Right ventricle myocardium superior (tissue), 1 donor: ENCODE measurements at regions of chr6 and their contacts with region 1.

Region 1: GRCh38 chr6:149431905-149432775 is 32.1 kb downstream of the SUMO4 start:
- DNase-seq: peak; percentile 95
- ATAC-seq: peak; percentile 98

Region 2: GRCh38 chr6:148720406-148720805 is 711.7 kb before region 1 on chr6:
- intact Hi-C with region 1: no loop called
- DNase-seq: no peak
- ATAC-seq: no peak

Region 3: DNA sequence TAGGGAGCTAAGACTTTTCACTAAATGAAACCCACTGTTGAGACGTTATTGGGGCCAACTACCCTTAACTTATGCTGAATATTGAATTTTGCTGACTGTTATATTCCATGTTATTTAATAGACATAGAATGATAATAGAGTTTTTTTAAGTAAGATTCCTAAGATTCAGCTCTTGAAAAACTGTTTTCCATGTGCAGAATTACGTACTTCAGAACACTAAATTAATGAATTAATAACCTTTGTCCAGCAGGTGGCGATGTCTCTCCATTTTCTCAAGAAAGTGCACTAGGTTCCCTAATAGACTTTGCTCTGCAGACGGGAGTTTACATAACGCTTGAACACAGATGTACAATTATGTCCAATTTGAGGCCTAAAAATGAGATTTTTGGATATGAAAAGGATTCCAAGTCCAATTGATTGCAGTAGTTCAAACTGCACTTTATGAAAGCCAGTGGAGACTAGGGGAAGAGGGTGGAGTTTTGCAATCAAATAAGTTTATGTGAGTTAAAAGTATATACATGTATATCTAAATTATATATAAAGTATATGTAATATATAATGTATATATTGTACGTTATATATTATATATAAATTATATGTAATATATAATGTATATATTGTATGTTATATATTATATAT is 403.3 kb before region 1 on chr6:
- intact Hi-C with region 1: loop called (anchors 2 kb)
- DNase-seq: no peak
- ATAC-seq: peak; percentile 85

Region 4: DNA sequence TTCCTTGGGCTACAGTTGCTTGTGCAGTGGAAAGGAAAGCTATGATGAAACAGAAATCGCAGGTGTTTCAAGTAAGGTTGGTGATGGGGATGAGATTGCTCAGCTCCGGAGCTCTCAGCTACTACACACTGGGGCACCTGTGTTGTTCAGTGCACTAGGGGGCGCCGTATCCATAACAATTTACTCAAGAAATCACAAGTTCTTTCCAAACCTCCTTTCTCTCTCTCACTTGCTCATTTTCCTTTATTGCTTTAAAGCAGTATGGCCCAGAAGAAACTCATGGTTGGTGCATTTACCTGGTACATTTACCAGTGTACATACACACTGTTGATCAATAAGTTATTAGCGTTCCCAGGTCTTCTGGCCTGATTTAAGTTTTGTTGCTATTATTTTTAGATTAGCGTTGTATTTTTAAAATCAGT is 349.8 kb before region 1 on chr6:
- intact Hi-C with region 1: loop called (anchors 5 kb)
- DNase-seq: peak; percentile 85
- ATAC-seq: peak; percentile 73